ENCODE measurements at regions of chr16 and their contacts with region 1.

Region 1: GRCh38 chr16:57795431-57795878 is 6.8 kb downstream of the KIFC3 start:
- DNase-seq: no peak
- H3K4me3 ChIP-seq: no peak overlapping the region
- H3K27me3 ChIP-seq: no peaks in the 10 kb centered on the region
- CTCF ChIP-seq: peak; percentile 48

Region 2: GRCh38 chr16:57185944-57186871 is 609.2 kb before region 1 on chr16 and contains the starts of genes PSME3IP1 and RSPRY1:
- CTCF ChIA-PET with region 1: no interaction called
- POLR2A ChIA-PET with region 1: no interaction called
- DNase-seq: peak; percentile 99
- H3K4me3 ChIP-seq: peak within 1 kb of the TSS; percentile 83
- H3K27me3 ChIP-seq: no peaks in the 10 kb centered on the region
- CTCF ChIP-seq: no peak
- polyA plus RNA-seq, gene PSME3IP1: 68.5 and 96.5 TPM in 2 replicates
- polyA plus RNA-seq, gene RSPRY1: 29.7 and 35.3 TPM in 2 replicates

Region 3: DNA sequence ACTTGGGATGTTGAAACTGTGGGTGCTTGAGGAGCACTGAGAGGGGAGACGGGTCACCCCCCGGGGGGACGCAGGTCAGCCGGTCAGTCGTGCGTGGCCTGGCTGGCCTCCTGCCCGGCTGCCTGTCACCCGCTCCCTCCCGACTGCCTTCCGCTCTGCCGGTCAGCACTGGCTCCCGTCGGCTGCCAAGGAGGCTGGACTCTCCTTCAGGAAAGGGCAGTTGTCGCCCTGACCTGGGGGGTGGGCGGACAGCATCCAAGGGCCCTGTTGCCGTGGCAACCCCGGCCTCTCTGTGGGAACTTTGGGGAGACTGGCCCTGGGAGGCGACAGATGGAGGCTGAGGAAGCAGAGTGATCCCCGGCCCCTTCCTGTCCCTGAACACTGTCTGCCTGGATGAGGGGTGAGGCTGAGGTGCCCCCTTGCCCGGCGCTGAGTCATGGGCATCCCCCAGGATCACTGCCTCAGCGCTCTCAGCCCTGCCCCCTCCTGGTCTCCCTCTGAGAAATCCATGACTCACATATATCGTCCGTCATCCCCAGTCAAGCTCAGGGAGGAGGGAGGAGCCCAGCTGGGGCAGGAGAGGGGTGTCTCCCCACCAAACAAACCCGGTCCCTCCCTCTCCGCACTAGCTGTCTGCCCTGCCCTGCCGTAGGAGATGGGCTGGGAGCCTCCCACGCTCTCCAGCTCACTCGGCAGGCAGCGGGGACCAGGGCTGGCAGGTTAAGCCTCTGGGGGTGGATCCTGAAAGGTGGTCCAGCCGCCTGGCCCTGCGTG is 167.3 kb before region 1 on chr16 and contains the start of gene ADGRG1:
- CTCF ChIA-PET with region 1: no interaction called
- POLR2A ChIA-PET with region 1: no interaction called
- DNase-seq: peak; percentile 79
- H3K4me3 ChIP-seq: peak within 1 kb of the TSS; percentile 2; the same call in 1 of the 2 replicates
- H3K27me3 ChIP-seq: no peaks in the 10 kb centered on the region
- CTCF ChIP-seq: peak; percentile 18; the same call in 1 of the 2 replicates
- polyA plus RNA-seq, gene ADGRG1: 0.44 and 1.1 TPM in 2 replicates

Region 4: GRCh38 chr16:57781741-57782606 is 13.5 kb before region 1 on chr16:
- CTCF ChIA-PET with region 1: interaction called, 11 read pairs
- POLR2A ChIA-PET with region 1: no interaction called
- DNase-seq: no peak
- H3K4me3 ChIP-seq: no peak overlapping the region
- H3K27me3 ChIP-seq: no peaks in the 10 kb centered on the region
- CTCF ChIP-seq: no peak

Region 5: DNA sequence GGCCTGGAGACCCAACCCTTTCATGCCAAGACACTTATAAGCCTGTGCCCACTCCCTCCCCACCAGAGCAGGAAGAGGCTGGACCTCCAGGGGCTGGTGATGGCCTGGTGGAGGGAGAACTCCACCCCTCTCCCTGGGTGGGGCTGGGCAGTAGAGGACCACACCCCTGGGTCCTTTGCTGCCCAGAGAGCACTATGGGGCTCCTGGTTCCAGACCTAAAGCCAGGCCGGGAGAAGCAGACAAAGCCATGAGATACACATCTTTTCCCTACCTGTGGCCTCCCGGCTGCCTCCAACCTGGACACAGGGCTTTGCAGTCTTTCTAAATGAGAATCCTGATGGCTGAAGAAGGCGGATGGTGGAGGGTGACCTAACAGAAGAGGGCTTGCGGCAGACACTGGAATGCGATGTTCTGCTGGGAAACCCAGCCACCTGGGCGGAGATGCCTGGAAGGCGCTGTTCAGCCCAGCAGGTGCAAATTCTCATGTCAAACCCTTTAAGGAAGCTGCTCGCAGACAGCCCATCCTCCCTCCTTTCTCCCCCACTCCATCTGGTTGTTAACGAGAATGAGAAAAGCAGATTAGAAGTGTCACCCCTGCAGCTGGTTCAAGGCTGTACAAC is 50.7 kb after region 1 on chr16:
- CTCF ChIA-PET with region 1: no interaction called
- POLR2A ChIA-PET with region 1: no interaction called
- DNase-seq: no peak
- H3K4me3 ChIP-seq: no peak overlapping the region
- H3K27me3 ChIP-seq: peaks cover 2% of the 10 kb centered on the region
- CTCF ChIP-seq: no peak

Measured in BJ (cell line).